Right cardiac atrium (tissue), 5 donors: ENCODE measurements at regions of chr17 and their contacts with region 1.

Region 1: GRCh38 chr17:81959362-81960129 is 1.4 kb downstream of the NOTUM start:
- DNase-seq: peak; percentile 65 to 90 (median 89)
- ATAC-seq: peak; percentile 82 to 87
- H3K4me3 ChIP-seq: peak overlapping the region; percentile 50
- H3K27ac ChIP-seq: no peak overlapping the region
- H3K4me1 ChIP-seq: no peaks in the 10 kb centered on the region
- H3K27me3 ChIP-seq: no peaks in the 10 kb centered on the region

Region 2: DNA sequence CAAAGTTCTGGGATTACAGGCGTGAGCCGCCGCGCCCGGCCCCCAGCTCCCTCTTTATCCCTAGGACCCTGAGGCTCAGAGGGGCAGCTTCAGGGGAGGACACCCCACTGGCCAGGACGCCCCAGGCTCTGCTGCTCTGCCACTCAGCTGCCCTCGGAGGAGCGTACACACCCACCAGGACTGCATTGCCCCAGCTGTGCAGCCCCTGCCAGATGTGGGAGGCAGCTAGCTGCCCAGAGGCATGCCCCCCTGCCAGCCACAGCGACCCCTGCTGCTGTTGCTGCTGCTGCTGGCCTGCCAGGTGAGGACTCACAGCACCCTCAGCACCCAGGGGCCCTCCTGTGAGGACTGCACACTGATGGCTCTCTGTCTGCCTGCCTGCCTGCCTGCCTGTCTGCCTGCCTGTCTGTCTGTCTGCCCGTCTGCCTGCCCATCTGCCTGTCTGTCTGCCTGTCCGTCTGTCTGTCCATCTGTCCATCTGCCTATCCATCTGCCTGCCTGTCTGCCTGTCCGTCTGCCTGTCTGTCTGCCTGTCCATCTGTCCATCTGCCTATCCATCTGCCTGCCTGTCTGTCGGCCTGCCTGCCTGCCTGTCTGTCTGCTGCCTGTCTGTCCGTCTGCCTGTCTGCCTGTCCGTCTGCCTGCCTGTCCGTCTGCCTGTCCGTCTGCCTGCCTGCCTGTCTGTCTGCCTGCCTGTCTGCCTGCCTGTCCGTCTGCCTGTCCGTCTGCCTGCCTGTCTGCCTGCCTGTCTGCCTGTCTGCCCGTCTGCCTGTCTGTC is 150.6 kb before region 1 on chr17:
- intact Hi-C with region 1: no loop called
- DNase-seq: peak in 1 of 3 donors; percentile 33
- ATAC-seq: no peak
- H3K4me3 ChIP-seq: no peak overlapping the region
- H3K27ac ChIP-seq: no peak overlapping the region
- H3K4me1 ChIP-seq: no peaks in the 10 kb centered on the region
- H3K27me3 ChIP-seq: no peaks in the 10 kb centered on the region

Region 3: DNA sequence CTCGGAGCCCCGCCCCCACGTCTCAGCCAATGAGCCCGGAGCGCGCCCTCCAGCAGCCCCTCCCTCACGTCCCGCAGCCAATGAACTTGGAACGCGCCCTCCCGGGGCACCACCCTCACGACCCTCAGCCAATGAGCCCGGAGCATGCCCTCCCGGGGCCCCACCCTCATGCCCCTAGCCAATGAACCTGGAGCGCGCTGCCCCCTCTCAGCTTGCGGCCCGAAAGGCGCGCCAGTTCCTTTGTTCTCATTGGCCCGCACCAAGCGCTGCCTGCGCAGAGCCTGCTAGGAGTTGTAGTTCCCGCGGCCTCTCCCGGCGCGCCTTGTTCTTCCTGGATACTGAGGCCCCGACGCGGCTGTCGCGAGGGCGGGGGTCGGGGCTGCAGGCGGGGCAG is 63.4 kb after region 1 on chr17 and contains the start of gene LRRC45:
- intact Hi-C with region 1: loop called (anchors 1 to 5 kb)
- DNase-seq: peak; percentile 100
- ATAC-seq: peak; percentile 96
- H3K4me3 ChIP-seq: peak within 1 kb of the TSS; percentile 75
- H3K27ac ChIP-seq: peak within 1 kb of the TSS; percentile 31
- H3K4me1 ChIP-seq: peaks cover 3% of the 10 kb centered on the region
- H3K27me3 ChIP-seq: no peaks in the 10 kb centered on the region
- total RNA-seq, gene LRRC45: 3.2 to 6.7 (median 6.0) TPM

Region 4: DNA sequence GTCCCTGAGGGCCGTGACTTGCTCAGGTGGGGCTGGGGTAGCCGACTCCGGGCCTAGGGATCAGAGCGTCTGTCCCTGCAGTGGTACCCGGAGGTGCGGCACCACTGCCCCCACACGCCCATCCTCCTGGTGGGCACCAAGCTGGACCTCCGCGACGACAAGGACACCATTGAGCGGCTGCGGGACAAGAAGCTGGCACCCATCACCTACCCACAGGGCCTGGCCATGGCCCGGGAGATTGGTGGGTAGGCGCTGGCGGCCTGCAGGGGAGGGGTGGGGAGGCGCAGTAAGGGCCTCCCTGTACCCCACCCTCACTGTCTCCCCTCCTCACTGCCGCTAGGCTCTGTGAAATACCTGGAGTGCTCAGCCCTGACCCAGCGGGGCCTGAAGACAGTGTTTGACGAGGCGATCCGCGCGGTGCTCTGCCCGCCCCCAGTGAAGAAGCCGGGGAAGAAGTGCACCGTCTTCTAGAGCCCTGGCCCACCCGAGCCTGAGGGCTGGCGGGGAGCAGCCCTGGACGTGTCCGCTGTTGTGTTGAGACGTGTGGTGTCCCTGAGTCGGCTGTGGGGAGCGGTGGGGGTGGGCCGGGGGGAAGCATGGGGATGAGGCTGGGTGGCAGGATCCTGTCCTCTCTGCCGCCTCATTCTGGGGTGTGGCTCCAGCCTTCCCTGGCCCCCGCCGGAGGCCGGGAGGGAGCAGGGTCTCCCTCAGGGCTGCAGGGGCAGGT is 74.0 kb after region 1 on chr17:
- intact Hi-C with region 1: no loop called
- DNase-seq: no peak
- ATAC-seq: no peak
- H3K4me3 ChIP-seq: no peak overlapping the region
- H3K27ac ChIP-seq: no peak overlapping the region
- H3K4me1 ChIP-seq: peaks cover 4% of the 10 kb centered on the region
- H3K27me3 ChIP-seq: no peaks in the 10 kb centered on the region